ENCODE measurements at regions of chr2 and their contacts with region 1.

Region 1: GRCh38 chr2:204713211-204713610 is 167.9 kb downstream of the PARD3B start:
- DNase-seq: no peak
- ATAC-seq: no peak
- H3K4me3 ChIP-seq: no peak overlapping the region
- H3K27ac ChIP-seq: no peak overlapping the region
- H3K4me1 ChIP-seq: no peaks in the 10 kb centered on the region
- H3K27me3 ChIP-seq: no peaks in the 10 kb centered on the region
- CTCF ChIP-seq: no peak

Region 2: DNA sequence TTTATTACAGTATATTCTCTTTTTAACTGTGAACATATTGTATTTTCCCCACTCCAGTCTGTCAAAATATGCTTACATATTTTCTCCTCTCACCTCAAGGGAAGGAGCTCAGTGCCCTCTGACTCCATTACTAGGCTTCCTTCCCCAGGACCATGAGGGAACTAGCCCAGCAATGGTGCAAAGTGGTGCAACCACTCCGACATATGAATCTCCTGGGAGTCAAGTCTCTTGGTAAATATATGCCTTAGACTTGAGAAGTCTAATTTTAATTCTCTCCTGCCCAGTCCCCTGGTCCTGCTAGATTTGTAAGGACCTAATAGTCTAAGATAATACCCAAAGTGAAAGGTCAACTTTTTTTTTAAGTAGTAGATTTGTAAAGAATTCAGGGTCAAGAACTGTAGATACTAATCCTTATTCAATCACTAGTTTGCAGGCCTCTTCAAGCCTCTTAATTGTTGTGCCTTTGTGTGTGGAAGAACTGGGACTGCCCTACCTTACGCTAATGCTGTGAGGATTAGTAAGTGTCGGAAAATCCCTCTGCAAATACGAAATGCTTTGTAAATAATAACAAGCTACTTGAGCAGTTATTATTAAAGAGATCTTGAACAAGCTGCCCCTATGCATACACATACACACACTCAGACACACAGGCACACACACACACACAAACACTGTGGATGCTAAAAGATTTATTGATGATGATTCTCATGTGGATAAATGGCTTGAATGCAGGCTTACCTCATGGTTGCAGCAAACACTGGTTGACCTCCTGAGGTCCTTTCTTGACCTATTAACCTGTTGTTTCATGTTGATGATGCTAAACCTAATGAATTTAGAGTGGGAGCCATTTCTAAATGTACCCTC is 419.1 kb before region 1 on chr2:
- CTCF ChIA-PET with region 1: no interaction called
- POLR2A ChIA-PET with region 1: no interaction called
- intact Hi-C with region 1: no loop called
- DNase-seq: no peak
- ATAC-seq: no peak
- H3K4me3 ChIP-seq: no peak overlapping the region
- H3K27ac ChIP-seq: no peak overlapping the region
- H3K4me1 ChIP-seq: no peaks in the 10 kb centered on the region
- H3K27me3 ChIP-seq: peaks cover 13% of the 10 kb centered on the region
- CTCF ChIP-seq: no peak

Region 3: DNA sequence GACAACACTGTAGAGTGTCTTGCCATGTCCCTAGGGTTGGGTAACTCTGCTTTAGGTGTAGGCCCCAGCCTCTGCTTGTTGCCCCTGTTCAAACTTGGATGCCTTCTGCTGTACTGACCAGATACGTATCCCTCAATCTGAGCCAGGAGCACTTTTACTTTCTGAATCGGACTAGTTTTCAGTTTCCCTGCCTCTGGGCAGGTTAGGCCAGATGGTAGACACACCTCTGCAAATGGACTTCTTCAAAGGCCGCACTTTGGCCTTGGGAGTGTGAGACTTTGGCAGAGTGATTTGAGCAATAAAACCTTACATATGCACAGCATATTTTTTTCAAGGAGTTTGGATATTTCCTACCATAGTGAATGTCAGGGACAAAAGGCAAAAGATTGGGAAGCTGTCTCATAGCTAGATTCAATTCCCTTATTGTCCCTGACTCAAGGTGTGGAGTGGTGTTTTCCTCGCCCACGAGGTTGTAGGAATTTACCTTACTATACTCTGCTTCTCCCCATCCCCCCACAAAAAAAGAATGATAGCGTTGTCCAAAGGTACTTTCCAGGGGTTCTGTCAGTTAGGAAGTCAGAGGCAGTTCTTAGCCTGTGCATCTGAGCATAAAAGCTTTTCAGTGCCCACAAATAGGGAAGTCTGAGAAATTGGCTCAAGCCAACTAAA is 183.3 kb before region 1 on chr2:
- CTCF ChIA-PET with region 1: interaction called, 13 read pairs
- POLR2A ChIA-PET with region 1: no interaction called
- intact Hi-C with region 1: no loop called
- DNase-seq: no peak
- ATAC-seq: no peak
- H3K4me3 ChIP-seq: no peak overlapping the region
- H3K27ac ChIP-seq: no peak overlapping the region
- H3K4me1 ChIP-seq: peaks cover 21% of the 10 kb centered on the region
- H3K27me3 ChIP-seq: no peaks in the 10 kb centered on the region
- CTCF ChIP-seq: no peak

Region 4: GRCh38 chr2:204776781-204777559 is 63.8 kb after region 1 on chr2:
- CTCF ChIA-PET with region 1: no interaction called
- POLR2A ChIA-PET with region 1: no interaction called
- intact Hi-C with region 1: no loop called
- DNase-seq: peak; percentile 6
- ATAC-seq: peak; percentile 53; the same call in 1 of the 2 replicates
- H3K4me3 ChIP-seq: no peak overlapping the region
- H3K27ac ChIP-seq: no peak overlapping the region
- H3K4me1 ChIP-seq: no peaks in the 10 kb centered on the region
- H3K27me3 ChIP-seq: no peaks in the 10 kb centered on the region
- CTCF ChIP-seq: no peak

Region 5: DNA sequence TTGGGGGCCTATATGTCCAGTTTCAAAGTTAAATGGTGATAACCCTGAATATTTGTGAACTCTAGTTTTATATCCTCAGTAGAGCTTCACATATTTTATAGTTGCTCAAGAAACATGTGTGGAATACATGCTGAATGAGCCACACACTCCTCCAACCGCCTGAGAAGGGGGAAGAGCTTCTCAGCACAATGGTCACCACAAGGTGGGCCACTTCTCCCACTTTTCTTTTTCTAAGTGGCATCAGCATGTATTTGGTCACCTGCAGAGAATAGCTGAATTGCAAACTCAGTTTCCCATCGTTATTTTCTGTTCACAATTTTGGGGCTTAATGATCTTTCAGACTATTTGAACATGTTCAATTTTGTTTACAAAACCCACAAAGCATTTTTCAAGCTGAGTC is 172.5 kb after region 1 on chr2:
- CTCF ChIA-PET with region 1: no interaction called
- POLR2A ChIA-PET with region 1: no interaction called
- intact Hi-C with region 1: no loop called
- DNase-seq: no peak
- ATAC-seq: no peak
- H3K4me3 ChIP-seq: no peak overlapping the region
- H3K27ac ChIP-seq: no peak overlapping the region
- H3K4me1 ChIP-seq: no peaks in the 10 kb centered on the region
- H3K27me3 ChIP-seq: no peaks in the 10 kb centered on the region
- CTCF ChIP-seq: no peak; the same call in 1 of the 2 replicates